ENCODE measurements at regions of chr2 and their contacts with region 1.

Region 1: DNA sequence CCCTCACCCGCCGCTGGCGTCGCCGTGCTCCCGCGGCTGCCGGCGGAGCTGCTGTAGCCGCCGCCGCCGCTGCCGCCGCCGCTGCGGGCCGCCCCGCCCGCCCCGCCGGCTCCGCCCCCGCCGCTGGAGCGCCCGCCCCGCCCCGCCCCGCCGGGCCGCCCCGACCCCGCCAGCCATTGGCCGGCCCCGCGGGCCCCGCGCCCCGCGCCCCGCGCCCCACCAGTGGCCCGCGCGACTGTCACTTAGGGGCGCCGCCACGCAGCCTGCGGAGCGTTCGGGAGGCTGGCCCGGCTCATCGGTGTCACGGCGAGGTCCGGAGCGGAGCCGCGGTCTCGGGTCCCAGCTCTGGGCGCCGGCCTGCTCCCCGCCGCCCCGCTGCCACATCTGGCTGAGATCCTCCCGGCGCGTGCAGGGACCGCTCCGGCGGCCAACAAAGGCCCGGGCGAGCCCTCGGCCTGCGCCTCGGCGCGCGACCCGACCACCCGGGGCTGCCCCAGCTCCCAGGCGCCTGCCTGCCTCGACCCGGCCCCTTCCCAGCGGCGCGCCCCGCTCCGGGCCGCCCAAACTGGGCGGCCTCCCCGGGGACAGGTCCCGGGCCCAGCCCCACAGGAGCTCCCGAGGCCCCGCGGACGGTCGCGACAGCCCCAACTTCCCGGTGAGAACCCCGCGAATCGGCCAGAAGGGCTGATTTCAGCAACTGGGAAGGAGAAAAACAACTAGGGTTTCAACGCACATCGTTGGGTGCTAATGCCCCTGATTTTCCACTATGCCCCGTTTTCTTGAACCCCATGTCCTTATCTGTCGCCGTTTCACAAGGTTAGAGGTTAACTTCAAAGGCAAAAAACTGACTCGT is at the start of gene MGAT4A:
- DNase-seq: peak; percentile 59
- ATAC-seq: peak; percentile 75
- H3K4me3 ChIP-seq: peak within 1 kb of the TSS; percentile 77
- H3K27ac ChIP-seq: no peak within 1 kb of the TSS
- H3K4me1 ChIP-seq: peaks cover 28% of the 10 kb centered on the region
- H3K27me3 ChIP-seq: no peaks in the 10 kb centered on the region
- CTCF ChIP-seq: no peak
- total RNA-seq, gene MGAT4A: 1.7 and 6.1 TPM in 2 replicates

Region 2: DNA sequence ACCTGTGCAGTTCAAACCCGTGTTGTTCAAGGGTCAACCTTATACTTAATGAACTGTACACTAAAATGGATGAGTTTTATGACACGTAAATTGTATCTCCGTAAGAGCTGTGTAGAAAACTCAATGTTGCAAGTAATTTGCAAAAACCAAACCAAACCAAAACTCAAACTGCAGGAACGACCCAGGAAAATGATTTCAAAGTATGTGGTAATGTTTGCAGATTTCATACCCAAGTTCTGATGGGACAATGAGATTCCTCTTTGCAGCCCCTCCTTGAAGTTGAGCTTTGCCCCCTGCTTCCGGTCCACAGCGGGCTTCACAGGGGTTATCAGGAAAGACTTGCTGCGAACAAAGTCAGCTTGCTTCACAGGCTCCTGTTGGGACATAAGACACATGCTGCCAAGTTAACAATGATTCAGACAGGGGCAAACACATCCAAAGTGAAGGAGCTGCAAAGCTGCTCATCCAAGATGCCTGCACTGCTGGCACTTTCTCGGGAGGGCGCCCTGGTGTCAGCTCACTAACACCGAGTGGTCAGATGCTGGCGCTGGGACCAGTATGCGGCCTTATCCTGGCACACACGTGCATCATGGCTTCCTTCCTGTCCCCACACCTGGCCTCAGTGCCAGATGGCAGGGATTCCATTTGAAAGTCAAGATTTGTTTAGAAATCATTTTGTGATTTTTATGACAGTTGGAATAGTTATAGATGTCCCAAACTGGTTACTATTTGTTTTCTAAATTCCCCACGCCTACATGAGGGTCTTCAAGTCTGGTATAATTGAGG is 64.8 kb after region 1 on chr2:
- CTCF ChIA-PET with region 1: no interaction called
- POLR2A ChIA-PET with region 1: no interaction called
- intact Hi-C with region 1: loop called (anchors 2 kb)
- DNase-seq: no peak
- ATAC-seq: no peak
- H3K4me3 ChIP-seq: no peak overlapping the region
- H3K27ac ChIP-seq: no peak overlapping the region
- H3K4me1 ChIP-seq: peaks cover 24% of the 10 kb centered on the region
- H3K27me3 ChIP-seq: no peaks in the 10 kb centered on the region
- CTCF ChIP-seq: no peak

Region 3: GRCh38 chr2:98828793-98829371 is 97.6 kb after region 1 on chr2:
- CTCF ChIA-PET with region 1: no interaction called
- POLR2A ChIA-PET with region 1: no interaction called
- intact Hi-C with region 1: loop called (anchors 2 kb)
- DNase-seq: peak; percentile 88
- ATAC-seq: peak; percentile 83
- H3K4me3 ChIP-seq: no peak overlapping the region
- H3K27ac ChIP-seq: peak overlapping the region; percentile 69
- H3K4me1 ChIP-seq: peaks cover 23% of the 10 kb centered on the region
- H3K27me3 ChIP-seq: no peaks in the 10 kb centered on the region
- CTCF ChIP-seq: no peak

Region 4: GRCh38 chr2:98944775-98945174 is 213.5 kb after region 1 on chr2:
- CTCF ChIA-PET with region 1: no interaction called
- POLR2A ChIA-PET with region 1: no interaction called
- intact Hi-C with region 1: no loop called
- DNase-seq: no peak
- ATAC-seq: no peak
- H3K4me3 ChIP-seq: no peak overlapping the region
- H3K27ac ChIP-seq: no peak overlapping the region
- H3K4me1 ChIP-seq: no peaks in the 10 kb centered on the region
- H3K27me3 ChIP-seq: no peaks in the 10 kb centered on the region
- CTCF ChIP-seq: no peak

Region 5: DNA sequence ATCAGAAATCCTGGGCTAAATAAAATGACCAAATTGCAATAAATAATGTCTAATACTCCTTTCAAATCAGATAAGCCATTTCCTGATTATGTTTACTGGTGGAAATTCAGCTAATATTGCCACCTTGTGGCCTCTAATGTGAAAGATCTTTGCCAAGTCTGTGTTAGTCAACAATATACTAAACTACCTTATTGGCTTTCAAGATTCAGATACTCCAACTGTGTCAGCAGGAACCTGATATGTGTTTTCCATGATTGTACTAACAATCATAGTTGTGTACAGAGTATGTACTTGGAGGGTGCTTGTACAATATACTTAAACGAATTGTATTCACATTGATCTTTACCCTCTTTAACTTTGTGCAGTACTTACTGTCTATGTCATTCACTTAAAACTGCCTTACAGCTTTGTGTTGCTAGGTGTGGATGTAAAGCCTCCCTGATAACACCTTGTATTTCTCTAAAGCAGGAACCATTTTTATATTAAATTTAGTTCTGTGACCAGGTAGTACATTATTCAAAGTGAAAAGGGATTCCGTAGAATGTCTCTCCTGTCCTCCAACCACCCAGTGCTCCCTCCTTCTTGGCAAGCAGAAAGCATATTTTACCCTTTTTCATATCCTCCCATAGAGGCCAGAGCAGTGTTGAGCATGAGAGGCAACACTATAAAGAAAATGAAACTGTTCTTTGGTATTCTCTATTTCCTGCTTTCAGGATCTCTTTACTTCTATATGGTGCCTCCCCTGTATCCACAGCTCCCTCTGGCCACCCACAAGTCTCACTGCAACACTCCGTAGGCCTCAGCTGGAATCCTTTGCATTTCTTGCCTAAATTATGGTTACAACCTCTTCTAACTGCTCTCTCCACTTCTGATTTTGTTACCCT is 335.1 kb after region 1 on chr2:
- CTCF ChIA-PET with region 1: interaction called, 3 read pairs
- POLR2A ChIA-PET with region 1: no interaction called
- intact Hi-C with region 1: loop called (anchors 5 kb)
- DNase-seq: peak; percentile 78
- ATAC-seq: peak; percentile 98
- H3K4me3 ChIP-seq: no peak overlapping the region
- H3K27ac ChIP-seq: no peak overlapping the region
- H3K4me1 ChIP-seq: no peaks in the 10 kb centered on the region
- H3K27me3 ChIP-seq: no peaks in the 10 kb centered on the region
- CTCF ChIP-seq: peak; percentile 82